Transverse colon (tissue), 4 donors: ENCODE measurements at regions of chr1 and their contacts with region 1.

Region 1: DNA sequence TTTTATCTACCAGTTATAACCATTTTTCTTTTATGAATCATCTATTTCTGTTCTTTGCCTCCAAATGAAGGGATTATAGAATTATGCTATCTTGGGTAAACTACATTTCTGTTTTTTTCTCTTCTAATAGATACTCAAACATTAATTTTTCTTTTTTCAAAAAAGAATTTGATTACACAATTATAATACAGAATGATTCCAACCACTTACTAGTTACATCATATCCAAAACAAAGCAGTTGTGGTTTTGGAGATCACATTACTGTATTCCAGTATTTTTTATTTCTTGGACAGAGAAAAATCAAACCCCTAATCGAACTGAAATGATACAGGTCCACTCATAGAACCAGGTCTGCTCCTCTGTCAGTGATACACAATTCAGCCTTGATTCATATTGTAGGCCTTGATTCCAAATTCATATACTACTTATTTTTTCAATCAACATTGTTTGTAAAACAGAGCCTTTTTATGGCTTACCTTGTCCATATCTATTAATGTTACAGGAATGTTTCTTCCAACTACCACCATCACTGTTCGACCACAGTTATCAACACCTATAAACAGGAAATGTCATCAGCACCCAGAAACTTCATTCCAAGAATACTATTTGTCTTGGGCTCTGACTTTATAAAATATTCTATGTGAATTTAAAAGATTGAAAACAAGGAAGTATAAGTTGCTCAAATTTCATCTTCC is 43.2 kb downstream of the GDAP2 start:
- DNase-seq: no peak
- H3K4me3 ChIP-seq: no peak overlapping the region
- H3K27ac ChIP-seq: no peak overlapping the region
- H3K4me1 ChIP-seq: no peaks in the 10 kb centered on the region
- H3K27me3 ChIP-seq: no peaks in the 10 kb centered on the region
- CTCF ChIP-seq: no peak
- EP300 ChIP-seq: no peak
- POLR2A ChIP-seq: no peak

Region 2: DNA sequence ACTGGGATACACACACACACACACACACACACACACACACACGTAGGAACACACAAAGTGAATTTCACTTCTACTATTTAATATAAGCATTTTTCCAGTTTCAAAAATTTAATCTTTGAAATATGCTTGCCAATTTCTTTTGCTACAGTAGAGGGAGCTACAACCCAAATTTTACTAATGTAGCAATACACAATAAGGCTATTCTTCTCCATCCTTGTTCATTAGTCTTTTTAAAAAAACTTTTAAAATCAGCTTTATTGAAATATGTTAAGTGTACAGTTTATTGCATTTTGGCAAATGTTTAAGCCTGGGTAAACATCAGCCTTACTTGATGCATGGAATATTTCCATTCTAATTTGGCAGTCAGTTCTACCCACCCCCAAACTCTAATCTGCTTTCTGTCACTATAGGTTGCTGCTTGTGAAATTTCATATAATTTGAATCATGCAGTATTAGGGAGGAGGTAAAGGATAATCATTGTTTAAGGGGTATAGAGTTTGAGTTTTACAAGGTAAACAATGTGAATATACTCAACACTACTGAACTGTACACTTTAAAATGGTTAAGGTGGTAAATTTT is 373.4 kb before region 1 on chr1:
- in situ Hi-C with region 1: loop called in 3 of 4 experiments (anchors 10 to 25 kb)
- intact Hi-C with region 1: no loop called
- DNase-seq: no peak
- H3K4me3 ChIP-seq: no peak overlapping the region
- H3K27ac ChIP-seq: no peak overlapping the region
- H3K4me1 ChIP-seq: no peaks in the 10 kb centered on the region
- H3K27me3 ChIP-seq: no peaks in the 10 kb centered on the region
- CTCF ChIP-seq: peak; percentile 48 to 67 (median 59)
- EP300 ChIP-seq: no peak
- POLR2A ChIP-seq: no peak

Region 3: GRCh38 chr1:117527566-117528102 is 358.6 kb before region 1 on chr1:
- in situ Hi-C with region 1: loop called in 3 of 4 experiments (anchors 10 to 25 kb)
- intact Hi-C with region 1: no loop called
- DNase-seq: no peak
- H3K4me3 ChIP-seq: no peak overlapping the region
- H3K27ac ChIP-seq: no peak overlapping the region
- H3K4me1 ChIP-seq: peaks cover 0 to 9% (median 6%) of the 10 kb centered on the region in 4 donors
- H3K27me3 ChIP-seq: no peaks in the 10 kb centered on the region
- CTCF ChIP-seq: no peak
- EP300 ChIP-seq: no peak
- POLR2A ChIP-seq: no peak

Region 4: GRCh38 chr1:118483245-118484006 is 597.2 kb after region 1 on chr1:
- in situ Hi-C with region 1: no loop called
- intact Hi-C with region 1: no loop called
- DNase-seq: no peak
- H3K4me3 ChIP-seq: no peak overlapping the region
- H3K27ac ChIP-seq: no peak overlapping the region
- H3K4me1 ChIP-seq: no peaks in the 10 kb centered on the region
- H3K27me3 ChIP-seq: no peaks in the 10 kb centered on the region
- CTCF ChIP-seq: no peak
- EP300 ChIP-seq: no peak
- POLR2A ChIP-seq: no peak